MCF 10A (cell line): ENCODE measurements at regions of chr10 and their contacts with region 1.

Region 1: GRCh38 chr10:97210543-97210961 is 24.8 kb upstream of the SLIT1 start:
- DNase-seq: peak; percentile 79
- H3K4me3 Mint-ChIP-seq: no peak overlapping the region
- H3K27ac Mint-ChIP-seq: no peak overlapping the region
- H3K4me1 Mint-ChIP-seq: no peaks in the 10 kb centered on the region
- H3K27me3 Mint-ChIP-seq: peaks cover 30% of the 10 kb centered on the region
- CTCF ChIP-seq: peak; percentile 92

Region 2: DNA sequence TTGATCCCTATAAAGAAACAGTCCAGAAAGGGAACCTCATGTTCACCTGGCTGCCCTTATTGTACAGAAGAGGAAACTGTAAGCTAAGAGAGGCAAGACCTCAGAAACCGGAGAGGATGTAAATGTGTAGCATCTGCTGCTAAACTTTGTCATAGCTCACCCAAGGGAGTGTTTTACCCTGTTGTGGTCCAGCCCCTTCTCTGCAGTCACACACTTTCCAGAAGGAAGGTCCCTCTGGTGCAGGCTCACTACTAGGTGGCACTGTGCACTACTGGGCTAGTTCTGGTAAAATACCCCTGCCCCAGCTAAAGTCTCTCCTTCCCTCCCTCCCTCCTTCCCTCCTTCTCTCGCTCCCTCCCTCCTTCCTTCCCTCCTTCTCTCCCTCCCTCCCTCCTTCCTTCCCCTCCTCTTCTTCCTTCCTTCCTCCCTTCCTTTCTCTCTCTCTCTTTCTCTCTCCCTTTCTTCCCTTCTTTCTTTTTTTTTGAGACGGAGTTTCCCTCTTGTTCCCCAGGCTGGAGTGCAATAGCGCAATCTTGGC is 420.9 kb before region 1 on chr10:
- CTCF ChIA-PET with region 1: interaction called, 3 read pairs
- POLR2A ChIA-PET with region 1: no interaction called
- intact Hi-C with region 1: loop called (anchors 10 kb)
- DNase-seq: peak; percentile 56
- H3K4me3 Mint-ChIP-seq: no peak overlapping the region
- H3K27ac Mint-ChIP-seq: no peak overlapping the region
- H3K4me1 Mint-ChIP-seq: peaks cover 1% of the 10 kb centered on the region
- H3K27me3 Mint-ChIP-seq: peaks cover 23% of the 10 kb centered on the region
- CTCF ChIP-seq: peak; percentile 52

Region 3: DNA sequence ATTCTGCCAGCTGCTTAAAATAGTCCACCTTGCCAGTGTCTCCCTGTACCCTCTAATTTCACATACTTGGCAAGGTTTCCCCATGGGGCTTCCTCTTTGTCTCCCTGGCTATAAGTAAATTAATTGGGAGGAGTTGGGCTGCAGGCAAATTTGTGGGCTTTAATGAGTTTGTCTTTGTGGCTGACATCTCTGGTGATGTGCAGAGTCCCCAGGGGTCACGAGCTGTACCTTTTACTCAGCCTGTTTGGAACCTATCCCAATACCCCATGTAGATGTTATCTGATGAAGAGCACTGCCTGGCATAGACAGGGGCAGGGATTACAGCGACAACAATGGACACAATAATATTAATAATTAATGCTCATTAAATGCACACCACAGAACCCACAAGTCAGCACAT is 157.3 kb before region 1 on chr10:
- CTCF ChIA-PET with region 1: interaction called, 10 read pairs
- POLR2A ChIA-PET with region 1: no interaction called
- intact Hi-C with region 1: no loop called
- DNase-seq: no peak
- H3K4me3 Mint-ChIP-seq: no peak overlapping the region
- H3K27ac Mint-ChIP-seq: no peak overlapping the region
- H3K4me1 Mint-ChIP-seq: no peaks in the 10 kb centered on the region
- H3K27me3 Mint-ChIP-seq: peaks cover 14% of the 10 kb centered on the region
- CTCF ChIP-seq: no peak

Region 4: DNA sequence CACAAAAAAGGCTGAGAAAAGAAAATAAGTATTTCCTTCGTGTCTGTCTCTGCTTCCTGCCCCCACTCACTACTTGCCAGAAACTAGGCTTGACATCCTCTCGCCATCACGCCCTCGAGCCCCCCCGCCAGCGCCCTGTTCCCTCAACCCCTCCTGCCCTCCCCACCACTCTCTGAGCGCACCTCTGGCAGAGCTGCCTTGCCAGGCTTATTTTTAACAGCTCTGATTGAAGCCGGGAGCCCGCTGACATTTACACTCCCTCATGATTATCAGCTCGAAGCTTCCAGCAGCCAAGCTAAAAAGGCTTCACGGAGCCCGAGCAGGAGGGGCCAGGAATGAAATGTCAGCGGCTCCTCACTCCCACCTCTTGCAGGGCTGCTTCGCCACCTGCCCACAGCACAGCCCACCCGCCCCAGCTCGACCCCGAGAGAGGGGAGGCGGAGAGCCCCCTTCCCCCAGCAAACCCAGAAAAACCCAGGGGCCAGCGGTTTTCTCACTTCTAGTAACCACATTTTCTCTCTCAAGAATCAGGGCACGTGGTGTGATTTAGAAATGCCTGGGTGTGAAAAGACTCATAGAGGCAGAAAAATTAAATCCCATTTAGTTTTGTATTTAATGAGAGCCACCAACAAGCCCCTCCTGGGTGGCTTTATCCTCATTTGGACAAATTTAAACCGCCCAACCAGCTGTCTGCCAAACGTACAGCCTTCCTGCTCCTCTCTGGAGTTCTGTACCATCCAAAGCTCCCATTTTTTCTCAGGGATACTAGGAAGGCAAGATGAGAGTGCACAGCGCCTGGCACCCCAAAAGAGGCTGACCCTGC is 114.1 kb before region 1 on chr10:
- CTCF ChIA-PET with region 1: interaction called, 11 read pairs
- POLR2A ChIA-PET with region 1: no interaction called
- intact Hi-C with region 1: no loop called
- DNase-seq: no peak
- H3K4me3 Mint-ChIP-seq: no peak overlapping the region
- H3K27ac Mint-ChIP-seq: no peak overlapping the region
- H3K4me1 Mint-ChIP-seq: no peaks in the 10 kb centered on the region
- H3K27me3 Mint-ChIP-seq: peaks cover 81% of the 10 kb centered on the region
- CTCF ChIP-seq: no peak

Region 5: GRCh38 chr10:97190450-97190849 is 20.1 kb before region 1 on chr10:
- CTCF ChIA-PET with region 1: interaction called, 111 read pairs
- POLR2A ChIA-PET with region 1: no interaction called
- intact Hi-C with region 1: no loop called
- DNase-seq: no peak
- H3K4me3 Mint-ChIP-seq: no peak overlapping the region
- H3K27ac Mint-ChIP-seq: no peak overlapping the region
- H3K4me1 Mint-ChIP-seq: no peaks in the 10 kb centered on the region
- H3K27me3 Mint-ChIP-seq: peaks cover 55% of the 10 kb centered on the region
- CTCF ChIP-seq: no peak

Region 6: DNA sequence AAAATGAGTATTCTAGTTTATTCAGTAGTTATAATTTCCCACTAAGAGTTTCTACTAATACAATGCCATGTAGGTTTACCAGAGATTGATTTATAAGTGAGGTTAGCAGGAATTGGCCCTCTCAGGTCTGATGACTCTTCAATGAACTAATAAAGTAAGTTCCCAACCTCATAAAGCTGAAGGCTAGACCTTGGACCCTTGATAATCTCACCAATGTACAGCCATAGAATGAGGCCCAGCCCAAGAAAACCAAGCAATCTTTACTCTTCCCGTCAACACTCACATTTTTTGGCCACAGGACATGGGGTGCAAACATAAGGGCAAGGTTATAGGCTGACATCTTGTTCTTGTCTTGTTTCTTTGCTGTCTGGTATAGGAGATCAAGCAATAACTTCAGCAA is 48.6 kb after region 1 on chr10:
- CTCF ChIA-PET with region 1: interaction called, 10 read pairs
- POLR2A ChIA-PET with region 1: interaction called, 3 read pairs
- intact Hi-C with region 1: no loop called
- DNase-seq: no peak
- H3K4me3 Mint-ChIP-seq: no peak overlapping the region
- H3K27ac Mint-ChIP-seq: no peak overlapping the region
- H3K4me1 Mint-ChIP-seq: no peaks in the 10 kb centered on the region
- H3K27me3 Mint-ChIP-seq: no peaks in the 10 kb centered on the region
- CTCF ChIP-seq: no peak